PC-9 (cell line): ENCODE measurements at regions of chr20 and their contacts with region 1.

Region 1: GRCh38 chr20:38790200-38791053 is 15.1 kb upstream of the PPP1R16B start:
- DNase-seq: peak; percentile 42 to 61
- H3K4me3 ChIP-seq: peak overlapping the region; percentile 24; the same call in 1 of the 2 replicates
- H3K27ac ChIP-seq: peak overlapping the region; percentile 67
- H3K4me1 ChIP-seq: peaks cover 17% of the 10 kb centered on the region
- H3K27me3 ChIP-seq: no peaks in the 10 kb centered on the region
- CTCF ChIP-seq: peak; percentile 85

Region 2: GRCh38 chr20:38498909-38499308 is 291.5 kb before region 1 on chr20:
- CTCF ChIA-PET with region 1: no interaction called
- POLR2A ChIA-PET with region 1: no interaction called
- intact Hi-C with region 1: no loop called
- DNase-seq: no peak
- H3K4me3 ChIP-seq: no peak overlapping the region
- H3K27ac ChIP-seq: no peak overlapping the region
- H3K4me1 ChIP-seq: no peaks in the 10 kb centered on the region
- H3K27me3 ChIP-seq: no peaks in the 10 kb centered on the region
- CTCF ChIP-seq: no peak

Region 3: DNA sequence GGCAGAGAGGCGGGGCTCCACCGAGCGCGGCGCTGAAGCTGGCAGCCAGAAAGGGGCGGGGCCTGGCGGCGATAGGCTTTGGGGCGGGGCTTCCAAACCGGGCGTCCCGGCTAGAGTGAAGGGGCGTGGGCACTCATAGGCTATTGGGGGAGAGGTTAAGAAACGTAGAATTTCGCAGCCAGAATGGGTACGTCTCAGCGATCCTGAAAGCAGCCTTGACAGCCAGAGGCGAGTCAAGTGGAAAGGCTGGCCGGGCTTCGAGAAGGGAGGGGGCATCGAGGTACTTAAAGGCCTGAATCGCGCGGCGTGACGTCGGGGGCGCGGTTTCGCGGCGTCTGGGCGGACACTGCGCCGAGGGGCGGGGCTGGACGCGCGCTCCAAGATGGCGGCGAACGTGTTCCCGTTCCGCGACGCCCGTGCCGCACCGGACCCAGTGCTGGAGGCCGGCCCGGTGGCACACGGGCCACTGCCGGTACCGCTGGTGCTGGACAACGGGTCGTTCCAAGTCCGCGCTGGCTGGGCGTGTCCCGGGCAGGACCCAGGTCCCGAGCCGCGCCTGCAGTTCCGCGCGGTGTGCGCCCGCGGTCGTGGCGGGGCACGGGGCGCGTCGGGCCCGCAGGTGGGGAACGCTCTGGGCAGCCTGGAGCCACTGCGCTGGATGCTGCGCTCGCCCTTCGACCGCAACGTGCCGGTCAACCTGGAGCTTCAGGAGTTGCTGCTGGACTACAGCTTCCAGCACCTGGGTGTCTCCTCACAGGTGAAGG is 42.1 kb before region 1 on chr20 and contains the start of gene ACTR5:
- CTCF ChIA-PET with region 1: no interaction called
- POLR2A ChIA-PET with region 1: no interaction called
- intact Hi-C with region 1: loop called (anchors 1 kb)
- DNase-seq: peak; percentile 73 to 97
- H3K4me3 ChIP-seq: peak within 1 kb of the TSS; percentile 79
- H3K27ac ChIP-seq: peak within 1 kb of the TSS; percentile 40
- H3K4me1 ChIP-seq: peaks cover 13% of the 10 kb centered on the region; the same call in 1 of the 2 replicates
- H3K27me3 ChIP-seq: peaks cover 26% of the 10 kb centered on the region
- CTCF ChIP-seq: no peak
- total RNA-seq, gene ACTR5: 7.8 and 10.1 TPM in 2 replicates

Region 4: DNA sequence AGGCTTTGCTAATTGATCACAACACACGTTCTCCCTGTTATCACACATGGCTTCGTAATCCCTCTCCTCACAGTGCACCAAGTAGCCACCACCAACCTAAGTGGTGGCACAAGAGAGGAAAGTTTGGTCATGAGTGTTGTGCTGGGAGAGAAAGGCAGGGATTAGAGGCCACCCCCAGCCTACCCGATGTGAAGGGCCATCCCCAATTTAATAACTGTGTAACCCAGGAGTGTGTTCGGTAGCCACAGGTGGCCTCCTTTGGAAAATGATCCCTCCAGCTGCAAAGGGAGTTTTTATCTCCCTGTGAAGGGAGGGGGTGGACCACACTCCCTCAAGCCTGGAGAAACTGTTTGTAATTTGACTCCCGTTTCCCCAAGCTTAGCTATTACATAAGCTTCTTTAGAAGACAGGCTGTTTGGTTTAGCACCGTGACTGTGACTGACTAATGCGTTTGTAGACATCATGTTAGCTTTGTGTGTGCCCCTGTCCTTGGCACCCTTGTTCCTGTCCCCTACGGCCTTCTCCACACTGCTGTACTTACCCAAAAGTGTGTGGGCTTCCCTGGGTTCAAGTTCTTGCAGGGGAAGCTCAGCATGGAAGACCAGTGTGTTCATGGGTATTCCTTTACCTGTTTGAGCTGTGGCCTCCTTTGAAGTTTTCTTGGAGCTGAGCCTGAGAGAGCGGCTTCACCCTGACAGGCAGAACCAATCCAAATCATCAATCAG is 35.6 kb after region 1 on chr20:
- CTCF ChIA-PET with region 1: no interaction called
- POLR2A ChIA-PET with region 1: no interaction called
- intact Hi-C with region 1: loop called (anchors 5 kb)
- DNase-seq: peak; percentile 41 to 85
- H3K4me3 ChIP-seq: no peak overlapping the region
- H3K27ac ChIP-seq: peak overlapping the region; percentile 44
- H3K4me1 ChIP-seq: peaks cover 46% of the 10 kb centered on the region
- H3K27me3 ChIP-seq: peaks cover 5% of the 10 kb centered on the region; the same call in 1 of the 2 replicates
- CTCF ChIP-seq: no peak

Region 5: GRCh38 chr20:38844963-38845362 is 54.5 kb after region 1 on chr20:
- CTCF ChIA-PET with region 1: no interaction called
- POLR2A ChIA-PET with region 1: no interaction called
- intact Hi-C with region 1: no loop called
- DNase-seq: no peak
- H3K4me3 ChIP-seq: no peak overlapping the region
- H3K27ac ChIP-seq: no peak overlapping the region
- H3K4me1 ChIP-seq: no peaks in the 10 kb centered on the region
- H3K27me3 ChIP-seq: peaks cover 49% of the 10 kb centered on the region
- CTCF ChIP-seq: no peak

Region 6: DNA sequence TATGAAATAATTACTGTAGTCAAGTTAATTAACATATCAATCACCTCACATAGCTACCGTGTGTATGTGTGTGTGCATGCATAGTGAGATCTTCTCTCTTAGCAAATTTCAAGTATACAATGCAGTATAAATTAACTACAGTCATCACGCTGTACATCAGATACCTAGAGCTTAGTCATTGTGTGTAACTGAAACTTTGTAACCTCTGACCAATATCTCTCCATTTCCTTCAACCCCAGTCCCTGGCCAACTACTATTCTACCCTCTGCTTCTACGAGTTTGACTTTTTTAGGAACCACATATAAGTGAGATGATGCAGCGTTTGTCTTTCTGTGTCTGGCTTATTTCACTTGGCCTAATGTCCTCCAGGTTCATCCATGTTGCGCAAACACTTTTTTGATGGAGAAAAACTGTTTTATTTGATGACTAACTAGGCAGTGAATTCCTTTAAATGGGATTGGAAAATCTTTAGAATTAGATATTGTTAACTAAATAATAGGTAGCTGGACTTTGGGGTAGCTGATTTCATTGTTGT is 631.2 kb after region 1 on chr20:
- CTCF ChIA-PET with region 1: interaction called, 20 read pairs
- POLR2A ChIA-PET with region 1: no interaction called
- intact Hi-C with region 1: no loop called
- DNase-seq: no peak
- H3K4me3 ChIP-seq: no peak overlapping the region
- H3K27ac ChIP-seq: no peak overlapping the region
- H3K4me1 ChIP-seq: no peaks in the 10 kb centered on the region
- H3K27me3 ChIP-seq: no peaks in the 10 kb centered on the region
- CTCF ChIP-seq: no peak